H1 (cell line): ENCODE measurements at regions of chr16 and their contacts with region 1.

Region 1: DNA sequence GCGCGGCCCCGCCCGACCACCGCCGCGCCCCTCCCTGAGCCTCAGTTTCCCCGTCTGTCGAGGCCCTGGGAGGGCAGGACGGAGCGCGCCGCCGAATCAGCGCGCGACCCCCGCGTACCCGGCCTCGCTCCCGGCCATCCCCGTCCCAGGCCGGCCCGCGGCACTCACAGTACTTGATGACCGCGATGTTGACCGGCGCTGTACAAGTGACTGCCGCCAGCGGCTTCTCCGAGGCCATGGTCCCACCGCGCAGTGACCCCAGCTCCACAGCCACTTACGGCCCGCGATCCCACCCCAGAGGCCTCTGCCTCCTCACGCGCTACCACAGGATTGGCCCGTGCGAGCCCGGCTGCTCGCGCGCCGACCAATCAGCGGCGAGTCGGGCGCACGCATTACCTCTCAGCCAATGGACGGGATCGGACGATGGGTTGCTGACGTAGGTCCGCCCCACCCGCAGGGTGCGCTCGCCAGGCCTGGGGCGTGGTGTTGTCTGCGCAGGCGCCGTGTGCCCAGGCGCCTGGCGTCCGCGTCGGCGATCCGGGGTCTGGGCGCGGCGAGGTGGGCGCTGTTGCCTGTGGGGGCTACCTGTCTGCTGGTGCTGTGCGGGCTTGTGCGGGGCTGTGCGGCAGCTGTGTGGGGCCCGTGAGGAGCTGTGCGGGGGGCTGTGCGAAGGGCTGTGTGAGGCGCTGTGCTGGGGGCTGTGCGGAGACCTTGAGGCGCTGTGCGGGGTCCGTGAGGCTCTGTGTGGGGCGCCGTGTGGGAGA is at the start of gene MVD:
- DNase-seq: peak; percentile 96 to 97
- H3K4me3 ChIP-seq: peak within 1 kb of the TSS; percentile 74 to 84 (median 79)
- H3K27ac ChIP-seq: peak within 1 kb of the TSS; percentile 75; the same call in 1 of the 2 replicates
- H3K4me1 ChIP-seq: peaks cover 0 to 3% (median 0%) of the 10 kb centered on the region in 4 experiments; a peak in 2 of 7 replicates
- H3K27me3 ChIP-seq: no peaks in the 10 kb centered on the region
- CTCF ChIP-seq: no peak
- EP300 ChIP-seq: 0 out of 3 replicates have a peak, but pooled peaks of 1 of the 2 experiments have one; percentile 13
- POLR2A ChIP-seq: peak in 1 of 2 experiments; percentile 62; a peak in 1 of 3 replicates
- RAD21 ChIP-seq: no peak
- total RNA-seq, gene MVD: 77.3 and 80.6 TPM in 2 replicates

Region 2: DNA sequence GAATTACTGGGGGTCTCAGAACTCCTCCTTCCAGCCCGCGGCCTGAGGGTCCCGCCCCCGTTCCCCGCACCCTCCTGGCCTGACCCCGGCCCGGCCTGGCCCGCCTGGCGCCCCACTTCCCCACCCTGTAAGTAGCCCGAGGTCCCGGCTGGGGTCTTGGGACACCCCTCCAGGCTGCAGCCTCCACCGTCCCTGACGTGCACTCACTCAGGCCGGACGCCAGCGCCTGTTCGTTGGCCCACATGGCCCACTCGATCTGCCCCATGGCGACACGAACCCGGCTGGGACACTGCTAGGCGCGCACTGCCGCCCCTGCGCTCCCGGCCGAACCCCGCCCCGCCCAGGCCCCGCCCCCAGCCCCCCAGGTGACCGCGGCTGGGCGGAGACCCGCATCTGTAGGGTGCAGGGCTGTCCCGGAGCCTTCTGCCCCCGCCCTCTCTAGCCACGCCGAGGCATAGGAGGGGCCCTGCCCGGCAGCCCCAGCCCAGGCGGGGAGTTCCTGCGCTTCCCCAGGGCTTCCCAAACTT is 12.2 kb before region 1 on chr16 and contains the start of gene CYBA:
- CTCF ChIA-PET with region 1: interaction called, 4 read pairs
- POLR2A ChIA-PET with region 1: interaction called, 19 read pairs
- DNase-seq: peak in 1 of 2 experiments; percentile 90
- H3K4me3 ChIP-seq: peak within 1 kb of the TSS; percentile 69 to 95 (median 78)
- H3K27ac ChIP-seq: no peak within 1 kb of the TSS
- H3K4me1 ChIP-seq: peaks cover 0 to 11% (median 7%) of the 10 kb centered on the region in 4 experiments; a peak in 5 of 7 replicates
- H3K27me3 ChIP-seq: no peaks in the 10 kb centered on the region
- CTCF ChIP-seq: no peak
- EP300 ChIP-seq: no peak
- POLR2A ChIP-seq: peak in 1 of 2 experiments; percentile 69; a peak in 1 of 3 replicates
- RAD21 ChIP-seq: no peak
- total RNA-seq, gene CYBA: 136 and 161 TPM in 2 replicates